ENCODE measurements at regions of chr11 and their contacts with region 1.

Region 1: GRCh38 chr11:108008656-108009496 is at the start of gene CUL5:
- DNase-seq: peak; percentile 92
- H3K4me3 Mint-ChIP-seq: peak within 1 kb of the TSS; percentile 93
- H3K27ac Mint-ChIP-seq: peak within 1 kb of the TSS; percentile 76
- H3K4me1 Mint-ChIP-seq: peaks cover 15% of the 10 kb centered on the region
- H3K27me3 Mint-ChIP-seq: no peaks in the 10 kb centered on the region
- total RNA-seq, gene CUL5: 25.9 to 26.2 TPM

Region 2: DNA sequence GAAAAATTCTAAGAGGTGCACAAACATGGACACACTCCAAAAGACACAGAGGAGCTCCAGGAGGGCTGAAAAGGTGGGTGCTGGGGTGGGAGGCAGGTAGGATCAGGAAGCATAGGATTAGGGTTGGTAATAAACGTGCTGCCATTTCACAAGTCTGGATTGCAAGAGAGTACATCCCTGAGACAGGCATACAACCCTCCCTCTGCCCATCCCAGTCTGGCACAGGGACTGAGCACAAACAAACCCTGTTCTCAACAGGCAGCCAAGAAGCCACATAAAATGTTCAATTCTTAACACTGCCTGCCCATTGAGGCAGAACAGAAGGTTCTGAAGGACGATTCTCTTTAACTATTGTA is 168.8 kb before region 1 on chr11:
- CTCF ChIA-PET with region 1: interaction called, 6 read pairs
- intact Hi-C with region 1: loop called (anchors 5 kb)
- DNase-seq: no peak
- H3K4me3 Mint-ChIP-seq: no peak overlapping the region
- H3K27ac Mint-ChIP-seq: peak overlapping the region; percentile 93
- H3K4me1 Mint-ChIP-seq: peaks cover 68% of the 10 kb centered on the region
- H3K27me3 Mint-ChIP-seq: no peaks in the 10 kb centered on the region

Region 3: DNA sequence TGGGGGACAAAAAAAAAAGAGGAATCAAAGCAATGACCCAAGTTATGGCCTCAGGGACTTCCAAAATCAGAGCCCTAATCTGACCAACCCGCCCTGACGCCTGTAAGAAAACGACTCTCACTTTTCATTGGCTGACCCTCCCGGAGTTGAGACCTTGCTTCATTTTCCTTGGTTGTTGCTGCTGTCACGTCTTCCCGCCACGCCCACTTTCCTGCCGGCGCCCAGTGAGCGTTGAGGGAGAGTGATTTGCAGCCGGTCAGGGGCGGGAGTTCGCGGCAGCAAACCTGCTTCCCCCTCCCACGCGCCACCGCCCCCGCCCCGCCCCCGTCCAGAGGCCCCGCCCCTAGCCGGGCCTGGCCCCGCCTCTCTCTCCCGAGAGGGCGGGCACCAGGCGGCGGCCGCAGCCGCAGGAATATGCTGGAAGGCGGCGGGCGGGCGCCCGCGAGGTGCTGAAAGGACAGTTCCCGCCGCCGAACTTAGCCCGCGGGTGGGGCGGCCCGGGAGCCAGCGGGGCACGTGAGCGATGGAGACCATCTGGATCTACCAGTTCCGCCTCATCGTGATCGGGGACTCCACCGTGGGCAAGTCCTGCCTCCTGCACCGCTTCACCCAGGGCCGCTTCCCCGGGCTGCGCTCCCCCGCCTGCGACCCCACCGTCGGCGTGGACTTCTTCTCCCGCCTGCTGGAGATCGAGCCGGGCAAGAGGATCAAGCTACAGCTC is 80.7 kb before region 1 on chr11 and contains the start of gene RAB39A:
- CTCF ChIA-PET with region 1: interaction called, 4 read pairs
- intact Hi-C with region 1: loop called (anchors 1 kb)
- DNase-seq: peak; percentile 83
- H3K4me3 Mint-ChIP-seq: peak within 1 kb of the TSS; percentile 65
- H3K27ac Mint-ChIP-seq: no peak within 1 kb of the TSS
- H3K4me1 Mint-ChIP-seq: peaks cover 12% of the 10 kb centered on the region
- H3K27me3 Mint-ChIP-seq: peaks cover 44% of the 10 kb centered on the region
- total RNA-seq, gene RAB39A: not detected

Region 4: GRCh38 chr11:108467091-108467823 is 458.4 kb after region 1 on chr11 and contains the start of gene C11orf65:
- CTCF ChIA-PET with region 1: no interaction called
- intact Hi-C with region 1: loop called (anchors 1 kb)
- DNase-seq: peak; percentile 98
- H3K4me3 Mint-ChIP-seq: peak within 1 kb of the TSS; percentile 94
- H3K27ac Mint-ChIP-seq: peak within 1 kb of the TSS; percentile 96
- H3K4me1 Mint-ChIP-seq: peaks cover 8% of the 10 kb centered on the region
- H3K27me3 Mint-ChIP-seq: no peaks in the 10 kb centered on the region
- total RNA-seq, gene C11orf65: 2.2 to 3.1 TPM

Region 5: DNA sequence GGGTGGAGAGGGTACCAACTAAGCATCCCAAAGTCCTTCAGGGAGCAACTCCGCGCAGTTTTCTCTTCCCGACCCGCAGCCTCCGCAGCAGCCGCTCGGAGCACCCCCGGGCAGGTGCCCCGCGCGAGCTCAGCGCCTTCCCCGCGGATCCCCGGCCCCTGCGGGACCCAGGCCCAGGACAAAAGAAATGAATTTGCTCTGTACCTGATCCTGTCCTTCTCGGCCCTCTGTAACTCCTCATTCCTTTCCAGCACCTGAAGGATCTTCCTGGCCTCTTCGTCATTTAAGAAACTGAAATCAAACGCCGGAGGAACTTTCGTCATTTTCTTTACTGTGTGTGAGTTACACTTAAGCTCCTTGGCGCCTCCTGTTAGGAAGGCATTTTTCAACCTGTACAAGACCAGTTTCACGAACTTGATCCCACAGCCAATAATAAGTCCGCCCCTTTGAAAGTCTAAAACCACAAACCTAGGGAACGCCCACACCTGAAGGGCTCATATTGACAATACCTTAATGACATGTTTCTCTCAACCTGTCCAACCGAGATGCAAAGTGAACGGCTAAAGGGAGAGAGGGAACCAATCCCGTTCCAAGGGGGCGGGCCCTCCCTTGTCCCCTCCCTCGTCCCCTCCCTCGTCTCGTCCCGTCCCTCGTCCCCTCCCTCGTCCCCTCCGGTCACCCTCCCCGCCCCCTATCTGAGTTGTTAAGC is 584.5 kb after region 1 on chr11 and contains the start of gene EXPH5:
- CTCF ChIA-PET with region 1: no interaction called
- intact Hi-C with region 1: loop called (anchors 2 kb)
- DNase-seq: peak; percentile 95
- H3K4me3 Mint-ChIP-seq: peak within 1 kb of the TSS; percentile 88
- H3K27ac Mint-ChIP-seq: peak within 1 kb of the TSS; percentile 54
- H3K4me1 Mint-ChIP-seq: peaks cover 13% of the 10 kb centered on the region
- H3K27me3 Mint-ChIP-seq: peaks cover 3% of the 10 kb centered on the region
- total RNA-seq, gene EXPH5: 2.9 to 3.3 TPM

Region 6: DNA sequence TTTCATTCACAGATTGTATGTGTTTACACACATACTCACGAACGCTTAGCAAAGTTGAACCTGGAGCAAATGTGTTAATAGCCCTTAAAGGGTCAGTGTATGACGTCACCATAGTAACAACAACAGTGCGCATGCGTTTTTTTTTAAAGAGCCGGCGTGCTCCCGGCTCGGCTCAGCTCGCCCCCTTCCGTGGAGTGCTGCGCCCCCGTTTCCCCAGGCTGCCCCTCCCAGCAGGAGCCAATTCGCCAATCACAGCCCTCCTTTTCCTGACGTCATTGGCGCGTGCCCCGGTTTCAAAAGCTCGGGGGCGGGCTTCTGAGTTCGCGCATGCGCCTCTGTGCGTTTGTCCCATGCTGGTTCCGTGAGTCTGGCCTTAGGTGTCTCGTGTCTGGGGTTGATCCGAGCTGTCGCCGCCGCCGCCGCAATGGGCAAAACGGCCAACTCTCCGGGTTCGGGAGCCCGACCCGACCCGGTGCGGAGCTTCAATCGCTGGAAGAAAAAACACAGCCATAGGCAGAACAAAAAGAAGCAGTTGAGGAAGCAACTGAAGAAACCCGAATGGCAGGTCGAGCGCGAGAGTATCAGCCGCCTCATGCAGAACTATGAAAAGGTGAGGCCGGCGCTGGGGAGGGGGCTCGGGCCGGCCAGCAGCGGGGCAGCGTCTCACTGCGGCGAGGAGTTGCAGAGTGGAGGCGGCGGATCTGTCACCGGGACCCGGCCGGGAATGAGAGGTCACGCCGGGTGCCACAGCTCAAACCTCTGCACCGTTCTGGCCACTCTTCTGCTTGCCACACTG is 656.1 kb after region 1 on chr11 and contains the start of gene DDX10:
- CTCF ChIA-PET with region 1: interaction called, 6 read pairs
- intact Hi-C with region 1: loop called (anchors 5 kb)
- DNase-seq: peak; percentile 99
- H3K4me3 Mint-ChIP-seq: peak within 1 kb of the TSS; percentile 99
- H3K27ac Mint-ChIP-seq: peak within 1 kb of the TSS; percentile 86
- H3K4me1 Mint-ChIP-seq: peaks cover 38% of the 10 kb centered on the region
- H3K27me3 Mint-ChIP-seq: no peaks in the 10 kb centered on the region
- total RNA-seq, gene DDX10: 36.6 to 43.0 TPM